HEK293T (cell line): ENCODE measurements at regions of chr1 and their contacts with region 1.

Region 1: GRCh38 chr1:165367375-165367993 is 11.0 kb upstream of the LMX1A start:
- DNase-seq: peak; percentile 89

Region 2: DNA sequence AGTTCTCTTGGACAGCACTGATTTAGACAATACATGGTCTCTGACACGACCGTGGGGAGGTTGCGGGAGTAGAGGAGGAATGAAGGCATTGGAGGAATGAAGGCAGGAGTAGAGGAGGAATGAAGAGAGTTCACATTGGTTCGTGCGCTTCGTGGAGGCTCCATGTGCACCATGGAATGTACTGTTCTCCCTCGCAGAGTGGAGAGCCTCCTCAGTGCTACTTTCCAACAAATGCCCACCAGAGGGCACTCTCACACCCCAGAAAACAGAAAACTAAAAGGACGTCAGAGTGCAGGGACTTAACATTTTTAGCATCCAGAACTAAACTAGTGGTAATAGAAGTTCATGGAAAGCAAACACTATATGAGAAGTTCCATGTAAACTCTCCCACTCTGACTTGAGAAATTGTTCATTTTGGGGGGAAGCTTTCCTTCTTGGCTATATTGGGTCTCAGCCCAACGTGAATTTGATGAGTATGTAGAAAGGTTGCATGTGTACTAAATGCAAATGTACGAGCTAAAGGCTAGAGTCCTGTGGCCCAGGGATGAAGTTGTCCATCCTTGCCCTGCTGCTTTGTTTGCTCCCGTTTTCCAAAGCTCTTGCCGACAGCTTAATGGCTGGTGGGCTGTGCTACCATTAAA is 222.6 kb before region 1 on chr1:
- CTCF ChIA-PET with region 1: interaction called, 14 read pairs
- POLR2A ChIA-PET with region 1: no interaction called
- DNase-seq: peak; percentile 77

Region 3: GRCh38 chr1:165257969-165258459 is 109.5 kb before region 1 on chr1:
- CTCF ChIA-PET with region 1: interaction called, 17 read pairs
- POLR2A ChIA-PET with region 1: no interaction called
- DNase-seq: peak; percentile 90

Region 4: DNA sequence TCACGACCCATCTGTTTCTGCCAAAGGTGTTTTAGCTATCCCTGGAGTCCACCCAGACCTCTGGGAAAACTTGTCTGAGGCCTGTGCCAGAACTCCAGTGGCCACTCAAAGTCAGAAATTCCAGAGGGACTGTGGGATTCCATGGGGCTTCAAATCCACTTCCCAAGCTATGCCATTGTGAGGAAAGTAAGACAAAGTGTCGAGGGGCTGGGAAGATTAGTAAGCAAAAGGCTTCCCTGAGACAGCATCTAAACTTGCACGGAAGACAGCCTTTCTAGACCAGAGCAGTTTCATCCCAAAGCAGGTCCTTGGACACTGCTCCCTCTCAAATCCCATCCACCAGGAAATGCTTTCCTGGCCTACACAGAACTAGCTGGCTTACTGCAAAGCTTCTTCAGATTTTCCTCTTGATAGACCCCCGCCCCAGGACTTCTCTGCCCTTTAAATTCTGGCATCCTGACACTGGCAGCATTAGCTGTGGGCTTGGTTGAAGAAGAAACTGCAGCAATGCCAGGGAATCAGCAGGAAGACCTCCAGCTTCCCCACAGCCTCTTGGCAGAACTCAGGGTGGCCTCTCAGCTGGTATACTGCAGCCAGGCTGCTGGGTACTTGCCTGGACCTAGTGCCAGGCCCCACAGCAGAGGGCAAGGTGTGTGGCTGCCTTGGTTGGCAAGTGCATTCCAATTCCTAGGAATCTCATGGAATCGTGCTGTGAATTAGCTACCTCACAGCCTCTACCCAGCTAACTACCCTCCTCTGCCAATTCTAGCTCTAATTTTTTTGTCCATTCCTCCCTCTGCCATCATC is 16.3 kb after region 1 on chr1:
- CTCF ChIA-PET with region 1: interaction called, 10 read pairs
- POLR2A ChIA-PET with region 1: no interaction called
- DNase-seq: no peak